CD4-positive, alpha-beta memory T cell (primary cell): ENCODE measurements at regions of chr4 and their contacts with region 1.

Region 1: DNA sequence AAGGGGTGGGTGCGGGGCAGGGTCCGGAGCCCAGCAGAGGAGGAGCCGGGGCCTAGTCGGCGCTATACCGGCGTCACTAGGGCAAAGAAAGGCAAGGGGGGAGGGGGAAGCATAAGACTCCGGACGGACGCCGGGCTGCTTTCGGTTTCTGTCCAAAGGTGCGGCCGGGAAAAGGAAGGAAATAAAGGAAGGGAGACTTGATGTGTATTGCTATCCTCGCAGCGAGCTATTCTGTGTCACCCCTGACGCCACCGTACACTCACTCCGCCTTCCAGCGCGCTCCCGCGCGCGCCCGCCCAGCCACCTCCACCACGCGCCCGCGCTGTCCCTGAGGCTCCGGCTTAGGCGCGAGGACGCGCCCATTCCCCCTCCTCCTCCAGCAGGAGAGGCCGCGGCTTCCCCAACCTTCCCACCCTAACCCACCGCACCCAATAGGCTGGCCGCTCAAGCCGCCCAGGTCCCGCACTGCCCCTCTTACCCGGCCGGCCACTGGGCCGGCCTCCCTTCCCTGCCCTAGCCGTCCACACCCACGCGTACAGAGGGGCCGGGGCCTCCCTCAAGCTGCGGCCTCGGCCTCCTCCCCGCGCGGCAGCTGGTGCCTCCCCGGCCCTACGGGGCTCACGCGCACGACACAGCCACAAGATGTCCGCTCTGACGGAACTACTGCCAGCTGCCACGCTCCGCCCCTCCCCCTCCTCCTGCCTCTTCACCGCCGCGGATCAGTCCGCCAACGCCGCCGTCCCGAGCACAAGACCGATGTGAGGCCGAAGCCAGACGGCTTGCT is at the start of gene UBE2D3:
- DNase-seq: peak; percentile 95 to 97 (median 96)
- H3K4me3 ChIP-seq: peak within 1 kb of the TSS; percentile 96 to 97
- H3K4me3 Mint-ChIP-seq: no peak within 1 kb of the TSS
- H3K27ac ChIP-seq: peak within 1 kb of the TSS; percentile 100
- H3K27ac Mint-ChIP-seq: no peak within 1 kb of the TSS
- H3K4me1 ChIP-seq: peaks cover 43% of the 10 kb centered on the region
- H3K4me1 Mint-ChIP-seq: peaks cover 25 to 42% (median 29%) of the 10 kb centered on the region in 4 donors
- H3K27me3 ChIP-seq: no peaks in the 10 kb centered on the region
- H3K27me3 Mint-ChIP-seq: peaks cover 0 to 2% of the 10 kb centered on the region in 2 donors
- total RNA-seq, gene UBE2D3: 337 to 339 TPM

Region 2: GRCh38 chr4:102449751-102450352 is 377.2 kb before region 1 on chr4:
- CTCF ChIA-PET with region 1: interaction called, 3 read pairs
- POLR2A ChIA-PET with region 1: interaction called, 3 read pairs
- intact Hi-C with region 1: loop called (anchors 5 kb)
- DNase-seq: peak; percentile 67 to 75 (median 68)
- H3K4me3 ChIP-seq: no peak overlapping the region
- H3K4me3 Mint-ChIP-seq: no peak overlapping the region
- H3K27ac ChIP-seq: no peak overlapping the region
- H3K27ac Mint-ChIP-seq: no peak overlapping the region
- H3K4me1 ChIP-seq: peaks cover 12% of the 10 kb centered on the region
- H3K4me1 Mint-ChIP-seq: peaks cover 5 to 21% (median 9%) of the 10 kb centered on the region in 4 donors
- H3K27me3 ChIP-seq: no peaks in the 10 kb centered on the region
- H3K27me3 Mint-ChIP-seq: no peaks in the 10 kb centered on the region

Region 3: DNA sequence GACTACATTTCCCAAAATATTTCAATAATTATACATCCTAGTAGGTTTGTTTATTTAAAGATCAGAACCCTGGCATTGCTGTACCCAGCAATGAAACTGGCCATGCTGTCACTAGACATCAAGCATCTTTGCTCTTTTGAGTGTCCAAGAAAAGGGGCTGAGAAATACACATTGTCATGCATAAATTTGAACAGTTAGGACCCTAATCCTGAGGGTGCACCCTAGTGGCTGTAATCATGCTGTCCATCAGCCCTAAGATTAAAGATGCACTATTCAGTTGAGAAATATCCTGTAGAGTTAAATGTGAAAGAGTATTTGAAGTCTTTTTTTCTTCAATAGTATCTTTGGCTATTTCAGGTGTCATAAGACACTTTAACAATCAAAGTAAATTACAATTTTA is 217.1 kb before region 1 on chr4:
- CTCF ChIA-PET with region 1: interaction called, 4 read pairs
- POLR2A ChIA-PET with region 1: interaction called, 60 read pairs
- intact Hi-C with region 1: loop called (anchors 5 kb)
- DNase-seq: no peak
- H3K4me3 ChIP-seq: no peak overlapping the region
- H3K4me3 Mint-ChIP-seq: peak overlapping the region in 5 of 8 donors; percentile 1 to 83 (median 44)
- H3K27ac ChIP-seq: no peak overlapping the region
- H3K27ac Mint-ChIP-seq: peak overlapping the region; percentile 18 to 99 (median 94)
- H3K4me1 ChIP-seq: peaks cover 84% of the 10 kb centered on the region
- H3K4me1 Mint-ChIP-seq: peaks cover 54 to 95% (median 76%) of the 10 kb centered on the region in 4 donors
- H3K27me3 ChIP-seq: no peaks in the 10 kb centered on the region
- H3K27me3 Mint-ChIP-seq: no peaks in the 10 kb centered on the region

Region 4: GRCh38 chr4:102789317-102789717 is 37.8 kb before region 1 on chr4:
- CTCF ChIA-PET with region 1: no interaction called
- POLR2A ChIA-PET with region 1: interaction called, 20 read pairs
- intact Hi-C with region 1: loop called (anchors 5 kb)
- DNase-seq: no peak
- H3K4me3 ChIP-seq: no peak overlapping the region
- H3K4me3 Mint-ChIP-seq: no peak overlapping the region
- H3K27ac ChIP-seq: no peak overlapping the region
- H3K27ac Mint-ChIP-seq: peak overlapping the region in 2 of 7 donors; percentile 14 to 68
- H3K4me1 ChIP-seq: peaks cover 6% of the 10 kb centered on the region
- H3K4me1 Mint-ChIP-seq: peaks cover 6 to 24% (median 20%) of the 10 kb centered on the region in 4 donors
- H3K27me3 ChIP-seq: no peaks in the 10 kb centered on the region
- H3K27me3 Mint-ChIP-seq: no peaks in the 10 kb centered on the region

Region 5: GRCh38 chr4:102850370-102850769 is 23.3 kb after region 1 on chr4:
- CTCF ChIA-PET with region 1: no interaction called
- POLR2A ChIA-PET with region 1: interaction called, 14 read pairs
- intact Hi-C with region 1: no loop called
- DNase-seq: no peak
- H3K4me3 ChIP-seq: no peak overlapping the region
- H3K4me3 Mint-ChIP-seq: no peak overlapping the region
- H3K27ac ChIP-seq: no peak overlapping the region
- H3K27ac Mint-ChIP-seq: no peak overlapping the region
- H3K4me1 ChIP-seq: no peaks in the 10 kb centered on the region
- H3K4me1 Mint-ChIP-seq: peaks cover 0 to 3% (median 2%) of the 10 kb centered on the region in 4 donors
- H3K27me3 ChIP-seq: no peaks in the 10 kb centered on the region
- H3K27me3 Mint-ChIP-seq: no peaks in the 10 kb centered on the region

Region 6: DNA sequence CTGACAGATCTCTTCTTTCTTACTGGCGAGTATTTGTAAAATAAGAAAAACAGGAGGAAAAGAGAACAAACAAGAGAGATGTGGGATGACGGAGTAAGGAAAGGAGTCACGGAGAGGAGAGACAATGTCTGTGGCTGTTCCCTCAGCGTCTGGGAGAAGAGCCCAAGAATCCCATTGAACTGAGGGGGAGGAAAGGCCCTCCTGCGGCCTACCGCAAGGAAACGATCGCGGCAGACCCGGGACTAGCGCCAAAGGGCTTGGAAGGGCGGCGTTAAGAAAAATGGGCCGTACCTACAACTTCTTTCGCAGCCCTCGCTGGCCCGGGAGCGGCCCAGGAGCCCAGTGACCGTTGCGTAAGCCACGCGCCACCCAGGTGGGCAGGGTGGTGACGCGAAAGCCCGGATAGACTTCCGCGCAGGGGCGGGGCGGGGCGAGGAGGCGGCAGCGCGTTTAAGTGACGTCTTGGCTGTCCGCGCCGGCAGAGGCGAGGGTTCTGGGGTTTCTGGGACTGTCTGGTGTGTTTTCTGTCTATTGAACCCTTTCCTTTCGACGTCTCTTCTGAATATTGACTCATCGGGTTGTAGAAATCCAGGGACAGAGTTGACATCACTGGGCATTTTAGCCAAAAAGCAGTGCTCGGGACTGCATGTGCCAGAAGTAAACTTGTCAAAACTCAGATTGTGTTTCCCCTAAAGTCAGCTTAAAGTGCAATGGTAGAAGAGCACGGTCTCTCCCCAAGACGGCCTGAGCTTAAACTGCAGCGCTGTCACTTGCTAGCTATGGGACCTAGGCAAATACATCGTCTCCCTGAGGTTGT is 192.4 kb after region 1 on chr4 and contains the start of gene SLC9B1:
- CTCF ChIA-PET with region 1: no interaction called
- POLR2A ChIA-PET with region 1: interaction called, 17 read pairs
- intact Hi-C with region 1: loop called (anchors 1 kb)
- DNase-seq: peak; percentile 91 to 94 (median 93)
- H3K4me3 ChIP-seq: peak within 1 kb of the TSS; percentile 11 to 90
- H3K4me3 Mint-ChIP-seq: peak within 1 kb of the TSS; percentile 85 to 98 (median 91)
- H3K27ac ChIP-seq: peak within 1 kb of the TSS; percentile 85
- H3K27ac Mint-ChIP-seq: peak within 1 kb of the TSS in 6 of 7 donors; percentile 97 to 100 (median 99)
- H3K4me1 ChIP-seq: peaks cover 17% of the 10 kb centered on the region
- H3K4me1 Mint-ChIP-seq: peaks cover 10 to 23% (median 19%) of the 10 kb centered on the region in 4 donors
- H3K27me3 ChIP-seq: no peaks in the 10 kb centered on the region
- H3K27me3 Mint-ChIP-seq: no peaks in the 10 kb centered on the region
- total RNA-seq, gene SLC9B1: 3.2 to 5.2 TPM

Region 7: GRCh38 chr4:103198111-103198765 is 371.2 kb after region 1 on chr4 and contains the start of gene CENPE:
- CTCF ChIA-PET with region 1: no interaction called
- POLR2A ChIA-PET with region 1: no interaction called
- intact Hi-C with region 1: loop called (anchors 1 kb)
- DNase-seq: peak; percentile 82 to 90 (median 87)
- H3K4me3 ChIP-seq: peak within 1 kb of the TSS; percentile 67 to 75
- H3K4me3 Mint-ChIP-seq: peak within 1 kb of the TSS; percentile 92 to 100 (median 96)
- H3K27ac ChIP-seq: peak within 1 kb of the TSS; percentile 88
- H3K27ac Mint-ChIP-seq: peak within 1 kb of the TSS; percentile 87 to 100 (median 99)
- H3K4me1 ChIP-seq: peaks cover 10% of the 10 kb centered on the region
- H3K4me1 Mint-ChIP-seq: peaks cover 9 to 18% (median 13%) of the 10 kb centered on the region in 4 donors
- H3K27me3 ChIP-seq: no peaks in the 10 kb centered on the region
- H3K27me3 Mint-ChIP-seq: peaks cover 0 to 5% of the 10 kb centered on the region in 2 donors
- total RNA-seq, gene CENPE: 0.67 to 1.5 TPM